Left ventricle myocardium superior (tissue), 1 donor: ENCODE measurements at regions of chr5 and their contacts with region 1.

Region 1: GRCh38 chr5:150656191-150657132 is 4.6 kb upstream of the MYOZ3 start:
- DNase-seq: peak; percentile 90
- ATAC-seq: peak; percentile 66

Region 2: DNA sequence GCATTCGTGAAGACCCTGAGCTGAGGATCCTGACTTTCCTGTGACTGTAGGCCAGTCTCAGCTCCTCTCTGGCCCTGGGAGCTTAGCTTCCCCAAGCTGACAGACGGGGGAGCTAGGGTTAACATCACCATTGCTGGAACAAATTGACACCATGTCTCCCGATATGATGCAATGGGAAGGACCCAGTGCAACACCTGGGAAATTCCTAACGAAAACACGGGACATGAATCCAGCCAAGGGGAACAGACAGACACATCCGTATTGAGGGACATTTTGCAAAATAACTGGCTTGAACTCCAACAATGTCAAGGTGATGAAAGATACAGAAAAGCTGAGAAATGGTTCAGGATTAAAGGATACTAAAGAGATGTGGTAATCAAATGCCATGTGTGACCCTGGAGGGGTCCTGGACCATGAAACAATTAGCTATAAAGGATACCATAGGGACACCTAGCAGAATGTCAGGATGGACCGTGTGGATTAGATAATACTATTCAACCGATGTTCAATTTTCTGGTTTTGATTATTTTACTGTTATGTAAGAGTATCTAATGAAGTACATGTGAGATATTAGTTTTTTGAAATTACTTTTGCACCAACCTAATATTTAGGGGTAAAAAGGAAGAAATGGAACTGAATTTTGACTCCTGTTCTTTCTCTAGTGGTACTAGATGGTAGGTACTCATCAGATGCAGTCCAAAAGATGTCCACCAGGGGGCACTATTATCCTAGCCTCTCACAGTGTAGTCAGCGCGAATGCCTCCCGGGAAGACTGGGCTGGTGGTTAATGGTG is 95.9 kb before region 1 on chr5:
- intact Hi-C with region 1: loop called (anchors 10 kb)
- DNase-seq: peak; percentile 61
- ATAC-seq: peak; percentile 87